ENCODE measurements at regions of chr1 and their contacts with region 1.

Region 1: DNA sequence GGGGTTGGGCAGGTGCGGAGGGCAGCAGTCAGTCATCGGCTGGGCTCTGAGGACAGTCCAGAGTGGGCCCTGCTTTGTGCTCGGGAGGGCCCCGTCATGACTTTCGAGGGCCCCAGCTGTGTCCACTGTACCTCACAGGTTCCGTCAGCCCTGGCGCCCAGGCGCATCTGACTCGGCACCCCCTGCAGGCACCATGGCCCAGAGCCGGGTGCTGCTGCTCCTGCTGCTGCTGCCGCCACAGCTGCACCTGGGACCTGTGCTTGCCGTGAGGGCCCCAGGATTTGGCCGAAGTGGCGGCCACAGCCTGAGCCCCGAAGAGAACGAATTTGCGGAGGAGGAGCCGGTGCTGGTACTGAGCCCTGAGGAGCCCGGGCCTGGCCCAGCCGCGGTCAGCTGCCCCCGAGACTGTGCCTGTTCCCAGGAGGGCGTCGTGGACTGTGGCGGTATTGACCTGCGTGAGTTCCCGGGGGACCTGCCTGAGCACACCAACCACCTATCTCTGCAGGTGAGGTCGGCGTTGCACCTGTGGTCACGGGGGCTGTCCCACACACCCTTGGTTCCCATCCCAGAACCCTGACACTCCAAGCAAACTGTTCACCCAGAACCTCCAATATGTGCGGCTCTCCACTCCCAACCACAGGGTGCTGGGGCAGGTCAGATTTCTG is 7.8 kb downstream of the PODN start:
- DNase-seq: peak in 1 of 2 experiments; percentile 48
- H3K4me3 ChIP-seq: no peak overlapping the region
- H3K27ac ChIP-seq: no peak overlapping the region
- H3K4me1 ChIP-seq: peaks cover 0 to 6% (median 0%) of the 10 kb centered on the region in 4 experiments; a peak in 2 of 7 replicates
- H3K27me3 ChIP-seq: peaks cover 0 to 2% (median 1%) of the 10 kb centered on the region in 4 experiments; a peak in 4 of 7 replicates
- CTCF ChIP-seq: no peak
- EP300 ChIP-seq: no peak
- POLR2A ChIP-seq: no peak
- RAD21 ChIP-seq: no peak

Region 2: GRCh38 chr1:53089478-53090226 is 19.9 kb after region 1 on chr1:
- CTCF ChIA-PET with region 1: interaction called, 23 read pairs
- POLR2A ChIA-PET with region 1: no interaction called
- DNase-seq: no peak
- H3K4me3 ChIP-seq: no peak overlapping the region
- H3K27ac ChIP-seq: no peak overlapping the region
- H3K4me1 ChIP-seq: peaks cover 0 to 5% (median 0%) of the 10 kb centered on the region in 4 experiments; a peak in 5 of 7 replicates
- H3K27me3 ChIP-seq: no peaks in the 10 kb centered on the region
- CTCF ChIP-seq: no peak
- EP300 ChIP-seq: no peak
- POLR2A ChIP-seq: no peak
- RAD21 ChIP-seq: no peak